ENCODE measurements at regions of chr2 and their contacts with region 1.

Region 1: DNA sequence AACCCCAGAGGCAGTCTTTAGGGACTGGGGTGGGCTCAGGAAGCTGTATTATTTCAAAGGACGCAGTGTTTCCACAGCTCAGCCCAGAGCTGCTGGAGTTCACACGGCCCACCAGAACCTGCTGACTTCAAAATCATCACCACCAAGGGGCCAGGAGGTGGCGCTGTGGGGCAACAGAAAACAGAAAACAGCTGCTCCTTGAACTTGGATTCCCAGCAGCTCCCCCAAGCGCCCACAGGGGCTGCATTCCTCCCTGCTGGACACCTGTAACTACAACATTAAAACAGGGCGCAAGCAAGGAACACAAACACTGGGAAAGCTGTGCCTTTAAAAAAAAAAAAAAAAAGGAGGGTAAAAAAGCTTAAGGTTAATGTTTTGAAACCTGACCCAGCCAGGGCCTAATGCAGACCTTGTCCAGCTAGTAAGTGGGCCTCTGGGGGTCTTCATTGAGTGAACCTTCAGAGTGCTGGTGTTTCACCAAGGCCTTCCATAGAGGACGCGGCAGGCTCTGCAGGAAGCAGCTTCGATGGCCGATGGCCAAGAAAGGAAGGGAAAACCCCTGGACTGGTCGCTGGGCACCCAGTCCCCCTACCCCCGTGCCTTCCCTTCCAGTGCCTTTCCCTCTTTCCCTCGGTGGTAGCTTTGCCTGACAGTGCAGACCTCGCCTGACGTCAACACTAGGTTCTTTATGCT is 25.9 kb downstream of the MLPH start:
- H3K4me3 ChIP-seq: no peak overlapping the region
- H3K27ac ChIP-seq: no peak overlapping the region
- H3K4me1 ChIP-seq: no peaks in the 10 kb centered on the region
- CTCF ChIP-seq: peak; percentile 93

Region 2: GRCh38 chr2:237154082-237154638 is 358.8 kb before region 1 on chr2:
- CTCF ChIA-PET with region 1: interaction called, 17 read pairs
- POLR2A ChIA-PET with region 1: no interaction called
- H3K4me3 ChIP-seq: no peak overlapping the region
- H3K27ac ChIP-seq: no peak overlapping the region
- H3K4me1 ChIP-seq: no peaks in the 10 kb centered on the region
- CTCF ChIP-seq: peak; percentile 43; the same call in 1 of the 2 replicates

Region 3: DNA sequence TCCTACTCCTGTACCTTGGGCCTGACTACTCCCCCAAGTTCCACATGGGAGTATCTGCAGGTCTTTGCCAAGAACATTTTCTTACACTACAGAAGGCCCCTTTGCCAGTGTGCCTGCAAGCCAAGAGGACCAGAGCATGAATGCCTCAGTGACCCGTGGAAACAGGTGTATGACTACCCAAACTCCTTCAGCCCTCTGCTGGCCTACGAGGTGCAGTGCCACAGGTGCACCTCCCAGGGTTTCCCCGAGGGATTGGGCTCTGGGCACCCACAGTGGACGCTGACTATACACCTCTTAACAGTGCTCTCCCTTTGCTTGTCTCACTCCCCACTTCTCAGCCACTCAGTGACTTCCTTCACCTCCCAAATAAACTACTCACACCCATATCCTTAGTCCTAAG is 190.4 kb before region 1 on chr2:
- CTCF ChIA-PET with region 1: no interaction called
- POLR2A ChIA-PET with region 1: no interaction called
- H3K4me3 ChIP-seq: no peak overlapping the region
- H3K27ac ChIP-seq: no peak overlapping the region
- H3K4me1 ChIP-seq: peaks cover 4% of the 10 kb centered on the region; the same call in 1 of the 2 replicates
- CTCF ChIP-seq: peak; percentile 23; the same call in 1 of the 2 replicates

Region 4: GRCh38 chr2:237500681-237501424 is 12.1 kb before region 1 on chr2:
- CTCF ChIA-PET with region 1: interaction called, 46 read pairs
- POLR2A ChIA-PET with region 1: interaction called, 3 read pairs
- H3K4me3 ChIP-seq: no peak overlapping the region
- H3K27ac ChIP-seq: no peak overlapping the region
- H3K4me1 ChIP-seq: no peaks in the 10 kb centered on the region
- CTCF ChIP-seq: no peak

Region 5: DNA sequence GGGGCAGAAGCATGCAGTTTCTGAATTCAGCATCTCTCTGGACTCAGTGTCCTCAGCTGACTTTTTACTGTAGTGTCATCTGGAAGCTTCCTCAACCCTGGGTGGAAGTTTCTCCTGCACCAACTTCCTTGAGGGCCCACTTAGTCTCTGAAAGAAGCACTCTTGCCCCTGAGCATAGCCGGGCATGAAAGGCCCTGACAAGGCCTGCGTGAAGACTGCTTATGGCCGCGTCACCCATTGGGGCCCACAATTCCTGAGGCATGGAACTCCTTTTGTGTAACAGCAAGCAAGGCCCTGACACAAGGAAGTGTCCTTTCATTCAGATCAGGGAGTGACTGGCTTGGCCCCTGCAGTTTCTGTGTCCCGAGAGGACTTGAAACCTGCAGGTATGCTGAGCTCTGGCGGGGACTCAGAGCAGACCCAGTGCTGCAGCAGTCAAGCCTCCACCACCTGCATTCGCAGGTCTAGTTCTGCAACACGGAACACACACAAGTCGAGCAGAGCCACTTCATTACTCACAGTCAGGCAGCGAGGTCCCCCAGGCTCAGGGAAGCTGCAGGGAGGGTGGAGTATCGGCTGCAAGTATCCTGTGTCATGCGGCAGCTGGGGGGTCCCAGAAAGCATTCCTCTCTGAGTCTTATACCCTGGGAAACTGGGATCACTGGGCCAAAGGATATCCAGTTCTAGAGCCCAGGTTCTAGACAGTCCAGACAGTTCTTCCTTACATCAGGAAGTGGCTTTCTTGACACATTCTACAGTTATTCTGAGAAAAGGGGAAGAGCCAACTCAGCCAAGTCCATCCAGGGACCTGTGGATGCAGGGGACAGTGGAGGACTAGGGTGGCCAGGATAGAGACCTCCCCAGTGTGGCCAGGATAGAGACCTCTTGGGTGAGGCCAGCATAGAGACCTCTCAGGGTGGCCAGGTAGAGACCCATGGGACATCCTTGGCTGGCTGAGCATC is 17.8 kb after region 1 on chr2:
- CTCF ChIA-PET with region 1: interaction called, 31 read pairs
- POLR2A ChIA-PET with region 1: no interaction called
- H3K4me3 ChIP-seq: no peak overlapping the region
- H3K27ac ChIP-seq: no peak overlapping the region
- H3K4me1 ChIP-seq: no peaks in the 10 kb centered on the region
- CTCF ChIP-seq: no peak

Region 6: GRCh38 chr2:237572021-237572741 is 59.3 kb after region 1 on chr2:
- CTCF ChIA-PET with region 1: interaction called, 256 read pairs
- POLR2A ChIA-PET with region 1: interaction called, 6 read pairs
- H3K4me3 ChIP-seq: no peak overlapping the region
- H3K27ac ChIP-seq: no peak overlapping the region
- H3K4me1 ChIP-seq: 0 out of 2 replicates have a peak, but pooled peaks cover 3% of the 10 kb centered on the region
- CTCF ChIP-seq: peak; percentile 99

Region 7: GRCh38 chr2:237774802-237775553 is 262.1 kb after region 1 on chr2:
- CTCF ChIA-PET with region 1: interaction called, 10 read pairs
- POLR2A ChIA-PET with region 1: no interaction called
- H3K4me3 ChIP-seq: no peak overlapping the region
- H3K27ac ChIP-seq: no peak overlapping the region
- H3K4me1 ChIP-seq: no peaks in the 10 kb centered on the region
- CTCF ChIP-seq: peak; percentile 30; the same call in 1 of the 2 replicates

Measured in HEK293 (cell line).